GM12878 (cell line): ENCODE measurements at regions of chr4 and their contacts with region 1.

Region 1: GRCh38 chr4:74531963-74532794 is 87.2 kb downstream of the AREG start:
- DNase-seq: peak; percentile 8
- ATAC-seq: peak; percentile 86
- H3K4me3 ChIP-seq: no peak overlapping the region
- H3K27ac ChIP-seq: no peak overlapping the region
- H3K4me1 ChIP-seq: no peaks in the 10 kb centered on the region
- H3K27me3 ChIP-seq: no peaks in the 10 kb centered on the region
- CTCF ChIP-seq: peak; percentile 44 to 59 (median 45)
- EP300 ChIP-seq: no peak
- POLR2A ChIP-seq: no peak
- RAD21 ChIP-seq: peak; percentile 58

Region 2: GRCh38 chr4:74320559-74321118 is 211.5 kb before region 1 on chr4:
- CTCF ChIA-PET with region 1: interaction called, 12 read pairs
- POLR2A ChIA-PET with region 1: no interaction called
- RAD21 ChIA-PET with region 1: interaction called, 5 read pairs
- SMC1A ChIA-PET with region 1: interaction called, 10 read pairs
- in situ Hi-C with region 1: no loop called
- intact Hi-C with region 1: loop called (anchors 1 kb)
- DNase-seq: peak; percentile 9
- ATAC-seq: peak; percentile 90
- H3K4me3 ChIP-seq: no peak overlapping the region
- H3K27ac ChIP-seq: no peak overlapping the region
- H3K4me1 ChIP-seq: no peaks in the 10 kb centered on the region
- H3K27me3 ChIP-seq: 0 out of 4 replicates have a peak, but pooled peaks cover 0 to 3% of the 10 kb centered on the region in 2 experiments
- CTCF ChIP-seq: peak; percentile 39 to 58 (median 50); a peak in 5 of 6 replicates
- EP300 ChIP-seq: no peak
- POLR2A ChIP-seq: no peak
- RAD21 ChIP-seq: peak; percentile 89

Region 3: DNA sequence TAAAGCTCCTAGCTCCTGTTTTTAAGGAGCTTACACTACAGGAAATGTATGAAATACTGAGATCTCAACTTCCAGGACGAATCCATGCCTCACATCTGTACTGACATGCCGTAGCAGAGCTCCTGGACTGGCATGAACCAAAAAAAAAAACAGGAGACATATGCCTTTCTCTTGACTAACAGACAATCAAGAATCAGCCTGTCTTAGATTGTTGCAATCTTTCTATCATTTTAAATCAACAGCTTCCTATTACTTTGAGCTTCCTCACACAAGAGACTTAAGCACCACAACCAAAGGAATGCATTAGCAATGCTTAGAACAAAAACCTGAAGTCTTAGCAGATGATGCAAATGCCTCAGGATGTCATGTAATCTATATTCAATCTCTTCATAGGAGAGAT is 121.9 kb before region 1 on chr4:
- CTCF ChIA-PET with region 1: no interaction called
- POLR2A ChIA-PET with region 1: no interaction called
- RAD21 ChIA-PET with region 1: no interaction called
- SMC1A ChIA-PET with region 1: no interaction called
- in situ Hi-C with region 1: no loop called
- intact Hi-C with region 1: no loop called
- DNase-seq: no peak
- ATAC-seq: no peak
- H3K4me3 ChIP-seq: no peak overlapping the region
- H3K27ac ChIP-seq: no peak overlapping the region
- H3K4me1 ChIP-seq: no peaks in the 10 kb centered on the region
- H3K27me3 ChIP-seq: no peaks in the 10 kb centered on the region; a peak in 1 of 4 replicates
- CTCF ChIP-seq: no peak
- EP300 ChIP-seq: no peak
- POLR2A ChIP-seq: no peak
- RAD21 ChIP-seq: no peak

Region 4: GRCh38 chr4:74623041-74623440 is 90.9 kb after region 1 on chr4:
- CTCF ChIA-PET with region 1: interaction called, 31 read pairs
- POLR2A ChIA-PET with region 1: no interaction called
- RAD21 ChIA-PET with region 1: interaction called, 4 read pairs
- SMC1A ChIA-PET with region 1: interaction called, 9 read pairs
- in situ Hi-C with region 1: no loop called
- intact Hi-C with region 1: loop called (anchors 5 kb)
- DNase-seq: no peak
- ATAC-seq: peak; percentile 77
- H3K4me3 ChIP-seq: no peak overlapping the region
- H3K27ac ChIP-seq: no peak overlapping the region
- H3K4me1 ChIP-seq: no peaks in the 10 kb centered on the region
- H3K27me3 ChIP-seq: no peaks in the 10 kb centered on the region
- CTCF ChIP-seq: peak; percentile 45 to 71 (median 56); a peak in 5 of 6 replicates
- EP300 ChIP-seq: no peak
- POLR2A ChIP-seq: no peak
- RAD21 ChIP-seq: peak; percentile 63